CD8-positive, alpha-beta T cell (primary cell): ENCODE measurements at regions of chr14 and their contacts with region 1.

Region 1: DNA sequence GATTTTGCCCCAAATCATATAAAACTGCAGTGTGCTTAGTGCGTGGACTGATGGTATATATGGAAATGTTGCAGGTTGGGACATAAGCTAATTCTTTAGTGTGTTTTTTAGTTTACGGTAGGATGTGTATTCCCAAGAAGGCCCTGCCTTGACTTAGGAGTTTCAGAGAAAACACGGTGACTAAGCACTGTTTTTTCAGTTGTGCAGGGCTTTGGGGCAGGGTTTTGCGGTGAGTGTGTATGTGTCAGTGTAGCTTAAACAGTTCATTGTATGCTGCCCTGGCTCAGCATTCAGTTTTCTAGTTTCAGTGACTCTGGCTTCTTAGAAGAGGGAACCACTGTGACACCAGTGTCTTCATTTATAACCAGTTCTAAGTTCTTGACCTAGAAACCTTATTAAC is 101.2 kb downstream of the AKAP6 start:
- DNase-seq: no peak
- ATAC-seq: no peak
- H3K4me3 ChIP-seq: no peak overlapping the region
- H3K4me3 Mint-ChIP-seq: no peak overlapping the region
- H3K27ac ChIP-seq: no peak overlapping the region
- H3K27ac Mint-ChIP-seq: no peak overlapping the region
- H3K4me1 ChIP-seq: no peaks in the 10 kb centered on the region
- H3K4me1 Mint-ChIP-seq: no peaks in the 10 kb centered on the region
- H3K27me3 ChIP-seq: no peaks in the 10 kb centered on the region
- H3K27me3 Mint-ChIP-seq: no peaks in the 10 kb centered on the region
- CTCF ChIP-seq: no peak

Region 2: GRCh38 chr14:32447371-32447770 is 17.0 kb after region 1 on chr14:
- CTCF ChIA-PET with region 1: interaction called, 3 read pairs
- POLR2A ChIA-PET with region 1: no interaction called
- intact Hi-C with region 1: loop called in 1 of 2 experiments (anchors 1 kb)
- DNase-seq: no peak
- ATAC-seq: no peak
- H3K4me3 ChIP-seq: no peak overlapping the region
- H3K4me3 Mint-ChIP-seq: no peak overlapping the region
- H3K27ac ChIP-seq: no peak overlapping the region
- H3K27ac Mint-ChIP-seq: no peak overlapping the region
- H3K4me1 ChIP-seq: no peaks in the 10 kb centered on the region
- H3K4me1 Mint-ChIP-seq: no peaks in the 10 kb centered on the region
- H3K27me3 ChIP-seq: no peaks in the 10 kb centered on the region
- H3K27me3 Mint-ChIP-seq: no peaks in the 10 kb centered on the region
- CTCF ChIP-seq: no peak